Transverse colon (tissue), 4 donors: ENCODE measurements at regions of chr2 and their contacts with region 1.

Region 1: DNA sequence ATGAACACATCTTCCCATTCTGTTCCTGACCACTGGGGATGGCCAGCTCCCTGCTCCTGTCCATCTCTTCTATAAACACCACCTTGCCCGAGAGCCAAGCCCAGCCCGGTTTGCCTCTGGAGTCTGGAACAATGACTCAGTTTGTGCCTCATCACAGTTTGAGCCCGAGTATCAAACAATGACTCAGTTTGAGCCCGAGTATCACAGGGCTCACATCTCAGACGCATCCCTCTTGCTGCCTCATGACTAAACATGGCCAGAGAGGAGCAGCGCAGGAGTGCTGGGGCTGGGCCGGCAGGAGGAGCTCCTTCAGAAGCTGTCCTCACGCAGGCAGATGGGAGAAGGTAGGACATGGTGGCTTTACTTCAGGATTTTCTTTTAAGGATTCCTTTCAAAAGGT is 68.7 kb downstream of the PXDN start:
- DNase-seq: peak; percentile 25
- H3K4me3 ChIP-seq: no peak overlapping the region
- H3K27ac ChIP-seq: peak overlapping the region; percentile 46 to 86 (median 74)
- H3K4me1 ChIP-seq: peaks cover 0 to 5% (median 5%) of the 10 kb centered on the region in 4 donors
- H3K27me3 ChIP-seq: no peaks in the 10 kb centered on the region
- CTCF ChIP-seq: peak in 4 of 5 experiments; percentile 24 to 29 (median 28)
- EP300 ChIP-seq: no peak
- POLR2A ChIP-seq: no peak

Region 2: DNA sequence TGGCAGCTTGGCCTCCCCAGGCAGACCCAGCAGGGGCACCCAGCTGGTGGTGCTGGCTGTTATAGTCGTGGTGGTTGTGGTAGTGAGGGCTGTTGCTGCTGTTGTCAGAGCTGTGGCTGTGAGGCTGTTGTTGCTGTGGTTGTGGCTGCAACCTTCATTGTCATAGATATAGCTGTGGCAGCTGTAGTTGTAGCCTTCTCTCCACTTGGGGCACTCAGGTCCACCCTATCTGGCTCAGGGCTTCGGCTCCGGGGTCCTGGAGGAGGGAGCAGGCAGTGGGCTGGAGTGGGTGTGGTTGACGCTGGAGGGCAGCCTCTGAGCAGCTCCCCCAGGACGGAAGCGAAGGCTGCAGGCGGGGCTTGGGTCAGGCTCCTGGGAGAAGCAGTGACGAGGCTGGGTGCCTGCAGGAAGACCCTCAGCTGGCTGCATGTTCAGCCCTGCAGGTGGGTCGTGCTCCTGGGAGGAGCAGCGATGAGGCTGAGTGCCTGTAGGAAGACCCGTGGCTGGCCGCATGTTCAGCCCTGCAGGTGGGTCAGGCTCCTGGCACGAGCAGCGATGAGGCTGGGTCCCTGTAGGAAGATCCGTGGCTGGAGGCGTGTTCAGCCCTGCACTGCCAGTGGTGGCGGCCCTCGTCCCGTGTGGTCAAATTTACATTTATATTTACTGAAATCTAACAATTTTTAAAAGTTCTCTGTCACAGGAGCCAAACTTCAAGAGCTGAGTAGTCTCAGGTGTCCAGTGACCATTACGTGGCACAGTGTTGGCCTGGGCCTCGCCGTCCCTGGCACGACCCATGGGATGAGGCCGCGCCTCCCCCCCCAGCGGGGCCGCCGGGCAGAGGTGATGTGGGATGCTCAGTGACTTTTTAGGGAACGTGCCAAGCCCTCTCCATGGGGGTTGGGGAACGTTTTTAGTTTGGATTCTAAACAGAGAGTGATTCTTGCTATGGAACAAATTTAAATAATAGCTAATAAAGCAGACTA is 147.8 kb after region 1 on chr2:
- in situ Hi-C with region 1: no loop called
- intact Hi-C with region 1: loop called (anchors 10 kb)
- DNase-seq: no peak
- H3K4me3 ChIP-seq: no peak overlapping the region
- H3K27ac ChIP-seq: peak overlapping the region in 3 of 4 donors; percentile 12 to 43 (median 41)
- H3K4me1 ChIP-seq: peaks cover 0 to 3% (median 0%) of the 10 kb centered on the region in 4 donors
- H3K27me3 ChIP-seq: no peaks in the 10 kb centered on the region
- CTCF ChIP-seq: no peak
- EP300 ChIP-seq: no peak
- POLR2A ChIP-seq: no peak